Right ventricle myocardium superior (tissue), 1 donor: ENCODE measurements at regions of chr12 and their contacts with region 1.

Region 1: DNA sequence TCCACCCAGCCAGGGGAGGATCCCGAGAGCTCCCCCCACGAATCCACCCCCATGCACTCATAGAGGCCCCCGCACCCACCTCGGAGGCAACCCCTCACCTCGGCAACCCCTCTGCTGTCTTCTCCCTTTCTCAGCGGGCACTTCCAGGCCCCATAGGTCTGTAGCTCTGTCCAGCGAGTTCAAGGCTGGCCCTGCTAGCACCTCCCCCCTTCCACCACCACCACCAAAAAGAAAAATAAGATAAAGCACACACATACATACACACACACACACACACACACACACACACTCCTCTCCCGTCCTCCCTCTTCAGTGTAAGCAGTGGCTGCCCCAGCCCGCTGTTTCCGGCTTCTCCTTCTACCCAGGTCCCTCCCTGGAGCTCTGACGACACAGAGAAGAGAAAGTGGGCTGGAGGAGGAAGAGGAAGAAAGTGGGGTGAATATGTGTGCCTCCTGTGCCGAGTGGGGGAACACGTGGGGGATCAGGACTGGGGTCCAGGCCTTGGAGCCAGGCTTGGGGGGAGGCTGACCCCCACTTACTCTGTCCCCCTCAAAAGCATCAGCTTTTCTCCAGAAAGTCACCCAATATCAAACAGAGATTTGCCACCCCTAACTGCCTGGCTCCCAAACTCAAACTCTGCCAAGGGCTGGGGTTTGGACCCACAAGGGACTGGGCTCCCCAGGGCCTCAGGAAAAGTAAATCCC is at the start of gene STAT6:
- DNase-seq: peak; percentile 89
- ATAC-seq: peak; percentile 79
- total RNA-seq, gene STAT6: 49.5 TPM

Region 2: DNA sequence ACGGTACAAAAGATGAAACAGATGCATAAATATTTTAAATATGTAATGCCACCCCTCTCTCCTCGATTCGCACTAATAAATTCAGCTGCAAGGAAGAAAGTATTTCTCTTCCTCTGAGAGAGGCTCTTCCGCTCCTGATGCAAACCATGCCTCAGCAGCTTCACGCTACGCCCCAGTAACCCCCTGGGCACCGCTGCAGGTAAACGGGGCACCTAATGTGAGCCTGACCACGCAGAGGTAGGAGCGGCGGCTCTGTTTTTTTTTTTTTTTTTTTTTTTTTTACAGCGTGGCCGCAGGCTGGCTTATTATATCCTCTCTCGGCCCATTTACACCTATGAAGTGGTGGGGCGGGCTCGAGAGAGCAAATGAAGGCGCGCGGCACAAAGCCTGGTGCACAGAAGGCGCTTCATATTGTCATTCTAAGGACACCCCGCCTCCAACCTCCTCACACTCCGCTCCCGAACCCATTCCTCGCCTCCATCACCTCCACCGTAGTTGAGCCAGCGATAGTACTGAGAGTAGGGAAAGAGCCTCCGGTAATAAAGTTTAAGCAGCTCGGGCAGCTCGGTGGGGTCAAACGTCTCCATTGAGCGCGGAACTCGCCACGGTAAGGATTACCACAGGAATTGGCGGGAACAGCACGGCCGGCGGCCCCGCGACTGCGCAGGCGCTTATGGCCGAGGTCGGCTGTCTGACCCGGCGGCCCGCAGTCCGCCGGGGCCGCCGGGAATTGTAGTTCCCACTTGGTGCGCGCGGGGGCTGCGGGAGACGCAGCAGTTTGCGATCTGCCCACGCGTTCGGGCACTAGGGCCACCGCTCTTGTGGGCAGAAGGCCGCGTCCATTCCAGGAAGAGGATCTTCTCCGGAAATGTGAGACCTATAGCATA is 359.2 kb before region 1 on chr12 and contains the start of gene PRIM1:
- intact Hi-C with region 1: loop called (anchors 10 kb)
- DNase-seq: peak; percentile 92
- ATAC-seq: peak; percentile 99
- total RNA-seq, gene PRIM1: 3.6 TPM

Region 3: DNA sequence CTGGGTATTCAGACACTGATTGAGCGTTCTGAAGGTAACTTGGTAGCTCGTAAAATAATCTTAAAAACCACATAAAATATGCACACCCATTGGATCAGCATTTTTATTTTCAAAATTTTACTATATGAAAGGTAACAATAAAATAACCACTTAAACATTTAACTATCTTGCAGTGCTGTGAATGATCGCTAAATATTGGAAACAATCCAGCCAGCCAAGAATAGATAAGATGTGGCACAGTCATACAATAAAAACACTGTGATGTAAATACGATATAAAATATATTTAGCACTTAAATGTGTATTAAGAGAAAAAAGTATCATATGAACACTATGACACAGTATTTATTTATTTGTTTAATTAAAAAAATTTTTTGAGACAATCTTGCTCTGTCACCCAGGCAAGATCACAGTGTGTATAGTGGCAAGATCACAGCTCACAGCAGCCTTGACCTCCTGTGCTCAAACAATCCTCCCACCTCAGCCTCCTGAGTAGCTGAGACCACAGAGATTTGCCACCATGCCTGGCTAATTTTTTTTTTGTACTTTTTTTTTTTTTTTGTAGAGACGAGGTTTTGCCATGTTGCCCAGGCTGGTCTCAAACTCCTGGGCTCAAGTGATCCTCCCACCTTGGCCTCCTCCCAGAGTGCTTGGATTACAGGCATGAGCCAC is 216.3 kb before region 1 on chr12:
- intact Hi-C with region 1: no loop called
- DNase-seq: no peak
- ATAC-seq: no peak

Region 4: GRCh38 chr12:57546438-57547383 is 435.5 kb after region 1 on chr12 and contains the start of gene DCTN2:
- intact Hi-C with region 1: no loop called
- DNase-seq: peak; percentile 96
- ATAC-seq: peak; percentile 98
- total RNA-seq, gene DCTN2: 95.0 TPM